ENCODE measurements at regions of chr1 and their contacts with region 1.

Region 1: DNA sequence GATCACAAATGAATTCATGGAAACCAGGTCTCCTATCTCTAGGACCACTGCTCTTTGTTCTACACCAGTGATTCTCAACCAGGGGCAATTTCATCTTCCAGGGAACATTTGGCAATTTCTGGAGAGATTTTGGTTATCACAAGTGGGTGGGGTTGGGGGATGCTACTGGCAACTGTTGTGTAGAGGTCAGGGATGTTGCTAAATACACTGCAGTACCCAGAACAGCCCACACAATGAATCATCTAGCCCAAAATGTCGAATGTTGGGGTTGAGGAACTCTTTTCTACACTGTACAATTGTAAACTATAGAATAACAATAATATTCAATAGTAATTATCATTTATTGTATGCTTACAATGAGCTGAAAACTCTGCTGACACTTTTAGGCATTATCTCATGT is 55.7 kb upstream of the UBE2U start:
- DNase-seq: no peak
- CTCF ChIP-seq: no peak

Region 2: GRCh38 chr1:63705078-63705477 is 442.7 kb before region 1 on chr1:
- in situ Hi-C with region 1: loop called (anchors 10 kb)
- DNase-seq: no peak
- CTCF ChIP-seq: no peak

Measured in GM13976 (cell line).